Tibial artery (tissue), 4 donors: ENCODE measurements at regions of chr5 and their contacts with region 1.

Region 1: GRCh38 chr5:154189819-154190594 is 526 bp upstream of the GALNT10 start:
- DNase-seq: peak; percentile 76 to 92
- H3K4me3 ChIP-seq: peak overlapping the region; percentile 78 to 86
- H3K27ac ChIP-seq: peak overlapping the region; percentile 70 to 73
- H3K4me1 ChIP-seq: peaks cover 0 to 44% (median 30%) of the 10 kb centered on the region in 4 donors
- H3K27me3 ChIP-seq: no peaks in the 10 kb centered on the region
- CTCF ChIP-seq: peak in 1 of 2 experiments; percentile 24

Region 2: DNA sequence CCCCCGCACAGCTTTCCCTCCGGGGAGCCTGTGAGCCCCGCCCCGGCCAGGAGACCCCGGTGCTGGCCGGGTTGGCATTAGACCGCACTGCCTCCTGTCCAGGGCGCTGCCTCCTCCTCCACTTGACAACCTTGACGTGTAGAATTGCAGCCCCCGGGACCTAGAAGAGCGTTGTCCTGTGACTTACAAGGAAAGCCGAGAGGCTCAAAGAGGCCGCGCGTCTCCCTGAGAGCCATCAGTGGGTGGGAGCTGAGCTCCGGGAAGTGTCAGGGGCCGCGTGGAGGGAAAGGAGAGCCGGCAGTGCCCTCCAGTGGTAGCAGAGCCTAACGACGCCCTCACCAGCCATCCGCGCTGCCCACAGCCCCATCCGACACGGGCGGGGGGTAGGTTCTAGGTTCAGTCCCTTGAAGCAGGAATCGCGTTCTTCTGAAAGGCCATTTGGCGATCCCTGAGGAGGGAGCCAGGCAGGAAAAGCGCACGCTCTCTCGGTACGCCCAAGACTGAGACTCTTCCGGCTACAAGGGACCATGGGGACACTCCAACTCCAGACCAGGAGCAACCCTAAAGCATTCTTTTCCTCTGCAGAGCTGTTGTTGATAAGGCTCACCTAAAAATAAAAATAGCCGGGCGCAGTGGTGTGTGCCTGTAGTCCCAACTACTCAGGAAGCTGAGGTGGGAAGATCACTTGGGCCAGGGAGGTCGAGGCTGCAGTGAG is 215.2 kb after region 1 on chr5:
- intact Hi-C with region 1: loop called (anchors 10 kb)
- DNase-seq: peak; percentile 76 to 84
- H3K4me3 ChIP-seq: peak overlapping the region; percentile 35 to 52
- H3K27ac ChIP-seq: peak overlapping the region in 1 of 2 donors; percentile 34
- H3K4me1 ChIP-seq: peaks cover 0 to 11% (median 4%) of the 10 kb centered on the region in 4 donors
- H3K27me3 ChIP-seq: no peaks in the 10 kb centered on the region
- CTCF ChIP-seq: peak; percentile 90 to 91